GM13977 (cell line): ENCODE measurements at regions of chr20 and their contacts with region 1.

Region 1: DNA sequence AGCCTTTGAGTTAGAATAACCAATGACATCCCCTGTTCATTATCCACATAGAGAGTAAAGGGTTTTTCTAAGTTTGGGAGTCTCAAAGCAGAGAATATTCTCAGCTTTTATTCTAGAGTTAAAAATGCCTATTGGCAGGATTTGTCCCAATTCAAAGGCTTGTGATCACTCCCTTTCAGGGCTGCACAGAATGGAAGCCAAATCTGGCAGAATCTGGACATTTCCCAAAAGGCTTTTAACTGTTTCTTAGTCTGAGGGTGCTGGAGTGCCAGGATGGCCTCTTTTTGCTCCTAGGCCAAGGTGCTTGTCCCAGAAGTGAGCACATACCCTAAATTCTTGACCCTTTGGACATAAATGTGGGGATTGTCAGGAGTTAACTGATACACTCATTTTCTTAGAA is 556.6 kb downstream of the DOK5 start:
- DNase-seq: no peak
- CTCF ChIP-seq: no peak

Region 2: DNA sequence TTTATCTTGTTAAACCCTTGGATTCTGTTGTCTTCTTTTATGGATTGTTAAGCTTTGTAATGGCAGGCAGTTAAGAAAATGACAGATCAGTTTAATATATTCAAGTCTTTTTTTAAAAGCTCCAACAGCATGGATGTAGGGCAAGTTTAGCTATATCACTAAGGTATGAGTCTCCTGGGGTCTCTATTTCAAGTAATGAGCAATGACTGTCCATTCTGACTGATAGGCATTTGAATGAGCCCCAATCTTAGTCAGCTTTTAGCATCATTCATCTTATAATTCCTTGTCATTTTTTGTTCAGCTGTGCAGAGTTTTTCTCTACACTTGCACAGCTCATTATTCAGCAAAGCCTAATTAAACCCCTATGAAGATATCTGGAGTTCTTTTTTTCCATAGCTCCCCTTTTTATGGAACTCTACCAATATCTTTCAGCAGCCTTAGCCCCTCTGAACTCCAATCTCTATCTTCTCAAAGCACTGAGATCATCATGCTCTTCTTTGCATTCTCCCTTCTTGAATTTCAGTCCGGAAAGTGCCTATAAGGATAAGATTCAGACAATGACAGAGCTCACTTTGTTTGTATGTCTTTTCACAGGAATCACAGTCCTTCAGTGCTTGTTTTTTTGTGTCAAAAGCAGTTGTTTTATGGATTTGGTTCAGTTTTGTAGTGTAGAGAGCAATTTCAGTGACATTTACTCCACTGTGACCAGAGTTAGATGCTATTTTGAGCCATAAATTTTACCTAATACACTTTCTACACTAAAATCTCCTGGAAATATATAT is 653.8 kb before region 1 on chr20:
- in situ Hi-C with region 1: no loop called
- DNase-seq: no peak
- CTCF ChIP-seq: no peak

Region 3: DNA sequence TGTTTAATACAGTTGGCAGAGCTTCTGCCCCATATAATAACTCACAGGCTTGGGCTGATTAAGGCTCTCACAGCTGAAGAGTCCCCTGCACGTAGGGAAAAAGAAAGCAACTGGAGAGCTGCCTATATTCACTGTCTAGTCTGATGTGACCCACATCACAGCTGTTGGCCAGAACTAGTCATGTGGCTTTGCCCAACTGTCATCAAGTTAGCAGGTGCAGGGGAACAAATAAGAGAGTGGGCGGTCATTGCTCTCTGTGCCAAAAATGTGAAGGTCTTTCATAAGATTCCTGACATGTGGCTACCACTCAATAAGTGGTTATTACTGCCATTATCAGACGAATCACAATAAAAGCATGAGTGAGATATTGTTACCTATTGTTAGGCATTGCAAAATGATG is 108.7 kb after region 1 on chr20:
- in situ Hi-C with region 1: loop called (anchors 25 kb)
- DNase-seq: no peak
- CTCF ChIP-seq: no peak